Vagina (tissue), 2 donors: ENCODE measurements at regions of chr11 and their contacts with region 1.

Region 1: GRCh38 chr11:36306888-36307287 is 10.8 kb downstream of the PRR5L start:
- DNase-seq: no peak
- H3K4me3 ChIP-seq: no peak overlapping the region
- H3K27ac ChIP-seq: no peak overlapping the region
- H3K4me1 ChIP-seq: no peaks in the 10 kb centered on the region
- H3K27me3 ChIP-seq: no peaks in the 10 kb centered on the region
- CTCF ChIP-seq: no peak
- POLR2A ChIP-seq: no peak

Region 2: DNA sequence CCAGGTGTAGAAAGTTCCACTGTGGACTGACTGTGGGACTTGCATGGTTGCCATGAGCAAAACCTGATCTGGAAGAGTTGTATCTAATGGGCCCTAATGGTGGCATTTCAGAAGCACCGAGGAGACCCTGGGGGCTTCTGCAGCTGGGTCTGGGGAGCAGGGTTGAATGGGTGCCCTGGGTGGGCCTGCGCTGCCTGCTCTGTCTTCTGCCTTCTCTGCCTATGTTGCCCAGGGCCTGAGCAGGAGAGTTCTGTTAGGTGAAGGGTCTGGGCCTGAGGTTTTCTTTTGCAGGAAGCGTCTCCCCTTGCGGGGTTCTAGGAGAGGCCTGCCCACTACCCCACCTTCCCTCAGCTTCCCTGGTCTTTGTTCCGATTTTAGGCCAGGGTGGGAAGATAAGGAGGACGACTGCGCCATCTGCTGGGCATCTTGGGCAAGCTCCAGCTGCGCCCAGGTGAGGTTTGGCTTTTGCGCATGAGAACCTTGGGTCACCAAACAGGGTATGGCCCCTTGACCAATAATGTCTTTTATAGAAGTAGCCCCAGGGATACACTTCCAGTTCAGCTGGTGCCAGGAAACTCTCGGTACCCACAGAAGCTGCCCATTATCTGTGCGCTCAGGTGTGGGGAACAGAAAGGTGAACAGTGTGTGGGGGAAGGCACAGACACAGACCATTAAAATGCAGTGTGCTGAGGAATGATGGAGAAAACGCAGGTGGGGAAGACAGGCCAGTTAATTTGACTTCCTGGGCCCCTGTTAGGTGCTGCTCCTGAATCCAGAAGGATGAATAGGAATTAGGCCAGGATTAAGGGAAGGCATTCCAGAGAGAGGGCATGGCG is 40.9 kb before region 1 on chr11:
- intact Hi-C with region 1: no loop called
- DNase-seq: no peak
- H3K4me3 ChIP-seq: no peak overlapping the region
- H3K27ac ChIP-seq: no peak overlapping the region
- H3K4me1 ChIP-seq: no peaks in the 10 kb centered on the region
- H3K27me3 ChIP-seq: no peaks in the 10 kb centered on the region
- CTCF ChIP-seq: peak; percentile 25 to 82 (median 81)
- POLR2A ChIP-seq: no peak

Region 3: GRCh38 chr11:36326524-36327419 is 19.9 kb after region 1 on chr11:
- intact Hi-C with region 1: no loop called
- DNase-seq: no peak
- H3K4me3 ChIP-seq: no peak overlapping the region
- H3K27ac ChIP-seq: no peak overlapping the region
- H3K4me1 ChIP-seq: no peaks in the 10 kb centered on the region
- H3K27me3 ChIP-seq: no peaks in the 10 kb centered on the region
- CTCF ChIP-seq: no peak
- POLR2A ChIP-seq: no peak

Region 4: DNA sequence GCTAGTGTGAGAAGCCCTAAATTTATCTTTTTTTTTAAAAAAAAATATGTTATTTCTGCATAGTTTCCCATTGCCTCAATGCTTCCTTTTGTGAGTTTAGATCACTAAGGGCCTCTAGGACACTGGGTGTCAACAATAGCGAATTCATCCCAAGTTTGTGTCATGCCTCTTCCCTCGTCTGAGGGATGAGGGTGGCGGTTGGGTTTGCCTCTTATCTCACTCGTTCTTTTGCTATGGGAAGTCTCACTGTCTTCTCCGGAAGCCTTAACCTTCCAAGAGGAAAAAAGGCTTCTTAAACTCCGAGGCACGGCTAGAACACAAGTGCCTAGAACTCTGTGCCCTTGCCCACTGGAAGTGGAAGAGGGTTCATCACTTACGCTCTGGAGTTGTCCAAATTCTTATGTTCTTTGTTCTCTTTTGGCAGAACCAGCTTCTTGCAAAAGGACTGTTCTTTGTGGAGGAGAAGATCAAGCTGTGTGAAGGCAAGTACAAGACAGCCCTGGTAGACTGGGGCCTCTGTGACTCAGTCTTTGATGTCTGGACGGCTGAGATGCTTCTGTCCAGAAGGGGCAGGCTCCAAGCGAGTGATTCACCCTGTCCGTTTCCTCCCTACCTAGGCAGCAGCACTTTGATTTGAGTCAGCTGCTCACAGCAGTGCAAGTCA is 124.7 kb after region 1 on chr11:
- intact Hi-C with region 1: no loop called
- DNase-seq: peak in 1 of 2 donors; percentile 97
- H3K4me3 ChIP-seq: no peak overlapping the region
- H3K27ac ChIP-seq: no peak overlapping the region
- H3K4me1 ChIP-seq: peaks cover 22% of the 10 kb centered on the region
- H3K27me3 ChIP-seq: no peaks in the 10 kb centered on the region
- CTCF ChIP-seq: no peak
- POLR2A ChIP-seq: no peak

Region 5: GRCh38 chr11:36478700-36479329 is 171.9 kb after region 1 on chr11:
- intact Hi-C with region 1: loop called (anchors 5 kb)
- DNase-seq: no peak
- H3K4me3 ChIP-seq: no peak overlapping the region
- H3K27ac ChIP-seq: no peak overlapping the region
- H3K4me1 ChIP-seq: no peaks in the 10 kb centered on the region
- H3K27me3 ChIP-seq: no peaks in the 10 kb centered on the region
- CTCF ChIP-seq: peak; percentile 9 to 53 (median 30)
- POLR2A ChIP-seq: no peak

Region 6: GRCh38 chr11:36744375-36745168 is 437.7 kb after region 1 on chr11:
- intact Hi-C with region 1: no loop called
- DNase-seq: peak in 1 of 2 donors; percentile 29
- H3K4me3 ChIP-seq: no peak overlapping the region
- H3K27ac ChIP-seq: no peak overlapping the region
- H3K4me1 ChIP-seq: no peaks in the 10 kb centered on the region
- H3K27me3 ChIP-seq: no peaks in the 10 kb centered on the region
- CTCF ChIP-seq: peak in 1 of 3 experiments; percentile 16
- POLR2A ChIP-seq: no peak